A673 (cell line): ENCODE measurements at regions of chr19 and their contacts with region 1.

Region 1: DNA sequence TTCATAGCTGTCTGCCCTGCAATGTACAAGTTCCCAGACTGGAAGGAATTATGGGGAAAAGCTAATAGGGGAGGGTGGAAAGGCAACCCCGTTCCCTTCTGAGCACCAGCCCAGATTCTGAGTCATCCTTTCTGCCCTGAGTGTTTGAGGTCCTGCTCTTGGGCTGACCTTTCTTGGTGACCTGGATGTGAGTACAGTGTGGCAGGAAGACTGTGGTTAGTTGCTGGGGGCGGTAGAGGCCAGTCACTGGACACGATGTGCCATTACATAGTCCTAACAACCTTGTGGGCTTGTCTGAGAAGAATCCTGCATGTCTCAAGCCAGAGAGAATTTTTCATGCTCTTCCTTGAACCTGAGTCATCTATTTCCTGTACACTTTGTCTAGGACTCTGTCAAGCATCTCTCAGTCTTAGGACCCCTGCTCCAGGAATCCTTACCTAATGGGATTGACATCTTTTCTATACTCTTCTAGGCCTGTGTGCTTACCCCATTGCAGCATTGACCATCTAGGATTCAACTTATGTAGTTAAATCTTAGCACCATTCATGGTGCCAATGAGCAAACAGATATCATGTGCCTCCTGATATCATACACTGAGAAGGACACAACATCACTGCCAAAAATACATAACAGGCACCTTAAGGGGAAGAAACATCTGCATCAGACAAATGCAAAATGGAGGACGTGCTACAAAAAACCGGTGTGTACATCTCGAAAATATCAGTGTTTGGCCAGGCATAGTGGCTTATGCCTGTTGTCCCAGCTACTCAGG is 8.1 kb upstream of the ANGPTL4 start:
- DNase-seq: no peak
- H3K4me3 ChIP-seq: no peak overlapping the region
- H3K27ac ChIP-seq: no peak overlapping the region
- H3K4me1 ChIP-seq: peaks cover 20% of the 10 kb centered on the region
- H3K27me3 ChIP-seq: no peaks in the 10 kb centered on the region
- CTCF ChIP-seq: no peak

Region 2: DNA sequence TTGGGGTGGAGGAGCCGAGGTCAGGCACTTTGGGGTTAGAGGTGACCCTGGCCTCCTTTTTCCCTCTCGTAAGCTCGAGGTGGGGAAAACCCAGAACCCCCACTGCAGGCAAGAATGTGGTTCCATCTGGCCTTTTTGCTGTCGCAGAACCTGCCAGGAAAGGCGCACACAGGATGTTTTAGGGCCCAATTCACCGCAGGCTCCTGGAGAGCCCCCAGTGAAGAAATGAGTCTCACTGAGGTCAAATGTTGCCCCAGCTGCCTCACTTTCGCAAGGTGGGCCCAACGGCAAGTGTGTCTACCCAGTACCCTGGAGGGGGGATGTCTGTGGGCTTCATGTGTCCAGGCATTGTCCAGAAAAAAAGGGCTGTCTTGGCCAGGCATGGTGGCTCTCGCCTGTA is 928.8 kb before region 1 on chr19:
- CTCF ChIA-PET with region 1: no interaction called
- POLR2A ChIA-PET with region 1: interaction called, 12 read pairs
- intact Hi-C with region 1: no loop called
- DNase-seq: no peak
- H3K4me3 ChIP-seq: no peak overlapping the region
- H3K27ac ChIP-seq: no peak overlapping the region
- H3K4me1 ChIP-seq: no peaks in the 10 kb centered on the region
- H3K27me3 ChIP-seq: no peaks in the 10 kb centered on the region
- CTCF ChIP-seq: no peak

Region 3: GRCh38 chr19:8252922-8253589 is 102.8 kb before region 1 on chr19:
- CTCF ChIA-PET with region 1: no interaction called
- POLR2A ChIA-PET with region 1: no interaction called
- intact Hi-C with region 1: no loop called
- DNase-seq: peak; percentile 89
- H3K4me3 ChIP-seq: no peak overlapping the region
- H3K27ac ChIP-seq: no peak overlapping the region
- H3K4me1 ChIP-seq: no peaks in the 10 kb centered on the region
- H3K27me3 ChIP-seq: no peaks in the 10 kb centered on the region
- CTCF ChIP-seq: peak; percentile 95

Region 4: GRCh38 chr19:8396563-8397203 is 40.9 kb after region 1 on chr19:
- CTCF ChIA-PET with region 1: no interaction called
- POLR2A ChIA-PET with region 1: interaction called, 7 read pairs
- intact Hi-C with region 1: loop called (anchors 2 kb)
- DNase-seq: peak; percentile 77
- H3K4me3 ChIP-seq: no peak overlapping the region
- H3K27ac ChIP-seq: no peak overlapping the region
- H3K4me1 ChIP-seq: peaks cover 7% of the 10 kb centered on the region
- H3K27me3 ChIP-seq: no peaks in the 10 kb centered on the region
- CTCF ChIP-seq: peak; percentile 68

Region 5: DNA sequence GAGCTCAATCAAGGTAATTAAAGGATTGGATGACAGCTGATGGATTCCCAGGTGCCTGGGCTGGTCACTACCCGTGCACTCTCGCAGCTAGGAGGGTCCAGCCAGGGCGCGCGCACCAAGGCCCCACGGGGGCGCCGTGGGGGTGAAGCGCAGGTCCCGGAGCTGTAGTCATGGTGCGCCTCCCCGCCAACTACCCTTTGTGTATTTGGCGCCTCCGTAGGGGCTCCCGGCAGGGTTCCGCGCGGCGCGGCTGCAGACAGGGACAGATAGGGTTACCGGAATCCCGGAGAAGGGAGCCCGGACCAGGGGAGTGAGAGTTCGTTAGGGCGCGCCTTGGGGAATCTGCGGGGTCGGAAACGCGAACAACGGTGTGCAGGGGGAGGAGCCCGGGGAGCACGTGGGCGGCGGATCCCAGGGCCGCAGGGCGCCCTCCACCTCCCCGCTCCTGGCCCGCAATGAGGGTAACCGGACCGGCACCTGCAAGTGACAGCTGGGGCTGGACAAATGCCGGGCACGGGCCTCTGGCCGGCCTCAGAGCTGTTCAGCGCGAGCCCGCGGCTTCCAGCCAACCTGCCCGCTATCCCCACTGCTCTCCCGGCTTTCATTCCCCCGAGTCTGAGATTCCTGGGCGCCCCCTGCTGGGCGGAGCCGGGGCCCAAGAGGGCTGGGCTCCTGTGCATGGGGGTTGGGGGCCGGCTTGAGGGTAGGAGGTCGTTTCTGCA is 150.0 kb after region 1 on chr19:
- CTCF ChIA-PET with region 1: interaction called, 6 read pairs
- POLR2A ChIA-PET with region 1: no interaction called
- intact Hi-C with region 1: loop called (anchors 2 kb)
- DNase-seq: peak; percentile 85
- H3K4me3 ChIP-seq: peak overlapping the region; percentile 62
- H3K27ac ChIP-seq: peak overlapping the region; percentile 78
- H3K4me1 ChIP-seq: peaks cover 11% of the 10 kb centered on the region
- H3K27me3 ChIP-seq: no peaks in the 10 kb centered on the region
- CTCF ChIP-seq: peak; percentile 90

Region 6: DNA sequence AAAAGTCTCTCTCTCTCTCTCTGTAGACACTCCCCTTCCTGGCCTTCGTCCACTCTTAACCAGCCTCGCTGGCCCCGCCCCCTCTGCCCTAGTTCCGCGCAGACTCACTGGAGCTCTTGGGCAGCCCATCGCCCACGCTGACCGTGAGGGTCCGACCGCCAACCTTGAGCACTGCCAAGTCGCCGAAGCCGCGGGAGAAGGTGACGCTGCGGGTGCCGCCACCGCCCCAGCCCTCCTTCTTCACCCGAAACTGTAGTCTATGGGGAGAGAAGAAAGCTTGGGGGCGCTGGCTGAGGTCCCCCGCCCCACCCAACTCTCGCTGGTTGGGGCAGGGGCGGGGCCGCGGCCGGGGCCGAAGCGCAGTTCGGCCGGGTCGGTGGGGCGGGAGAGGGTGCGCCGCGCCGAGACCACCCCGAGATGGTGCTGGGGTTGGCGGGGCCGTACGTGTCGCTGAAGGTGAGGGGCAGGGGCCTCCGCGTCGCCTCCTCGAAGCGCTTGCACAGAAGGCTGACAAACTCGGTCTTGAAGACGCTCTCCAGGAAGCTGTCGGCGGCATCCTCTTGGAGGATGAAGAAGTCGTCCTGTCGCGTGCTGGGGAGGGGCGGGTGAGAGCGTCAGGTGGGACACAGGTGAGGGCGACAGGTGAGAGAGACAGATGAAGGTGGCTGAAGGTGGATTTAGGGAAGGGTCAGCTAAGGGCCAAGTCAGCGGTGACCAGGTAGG is 170.7 kb after region 1 on chr19:
- CTCF ChIA-PET with region 1: no interaction called
- POLR2A ChIA-PET with region 1: interaction called, 9 read pairs
- intact Hi-C with region 1: loop called (anchors 5 kb)
- DNase-seq: peak; percentile 94
- H3K4me3 ChIP-seq: peak overlapping the region; percentile 79
- H3K27ac ChIP-seq: peak overlapping the region; percentile 96
- H3K4me1 ChIP-seq: peaks cover 6% of the 10 kb centered on the region
- H3K27me3 ChIP-seq: no peaks in the 10 kb centered on the region
- CTCF ChIP-seq: no peak

Region 7: DNA sequence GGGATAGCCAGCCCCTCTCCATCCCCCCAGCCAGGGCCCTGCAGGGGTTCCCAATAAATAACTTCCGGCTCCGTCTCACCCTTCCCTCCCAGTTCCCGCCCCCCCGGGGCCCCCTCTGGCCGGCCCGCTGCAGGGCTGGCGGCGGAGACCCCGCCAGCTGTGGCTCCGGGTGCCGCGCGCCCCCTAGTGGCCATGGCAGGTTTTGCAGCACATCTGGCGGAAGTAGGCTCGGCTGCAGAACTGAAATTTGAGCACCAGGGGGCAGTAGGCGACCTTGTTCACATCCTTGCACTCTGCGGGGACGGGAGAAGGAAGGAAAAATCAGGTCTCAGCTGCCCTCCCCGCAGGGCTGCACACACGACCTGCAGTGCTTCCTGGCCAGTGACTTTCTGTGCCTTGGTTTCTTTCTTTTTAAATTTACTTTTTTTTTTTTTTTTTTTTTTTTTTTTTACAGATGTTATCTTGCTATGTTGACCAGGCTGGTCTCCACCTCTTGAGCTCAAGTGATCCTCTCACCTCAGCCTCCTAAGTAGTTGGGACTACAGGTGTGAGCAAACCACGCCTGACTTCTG is 225.0 kb after region 1 on chr19:
- CTCF ChIA-PET with region 1: interaction called, 5 read pairs
- POLR2A ChIA-PET with region 1: no interaction called
- intact Hi-C with region 1: loop called (anchors 5 kb)
- DNase-seq: peak; percentile 86
- H3K4me3 ChIP-seq: no peak overlapping the region
- H3K27ac ChIP-seq: no peak overlapping the region
- H3K4me1 ChIP-seq: peaks cover 9% of the 10 kb centered on the region
- H3K27me3 ChIP-seq: no peaks in the 10 kb centered on the region
- CTCF ChIP-seq: peak; percentile 99